T-cell (primary cell): ENCODE measurements at regions of chr17 and their contacts with region 1.

Region 1: DNA sequence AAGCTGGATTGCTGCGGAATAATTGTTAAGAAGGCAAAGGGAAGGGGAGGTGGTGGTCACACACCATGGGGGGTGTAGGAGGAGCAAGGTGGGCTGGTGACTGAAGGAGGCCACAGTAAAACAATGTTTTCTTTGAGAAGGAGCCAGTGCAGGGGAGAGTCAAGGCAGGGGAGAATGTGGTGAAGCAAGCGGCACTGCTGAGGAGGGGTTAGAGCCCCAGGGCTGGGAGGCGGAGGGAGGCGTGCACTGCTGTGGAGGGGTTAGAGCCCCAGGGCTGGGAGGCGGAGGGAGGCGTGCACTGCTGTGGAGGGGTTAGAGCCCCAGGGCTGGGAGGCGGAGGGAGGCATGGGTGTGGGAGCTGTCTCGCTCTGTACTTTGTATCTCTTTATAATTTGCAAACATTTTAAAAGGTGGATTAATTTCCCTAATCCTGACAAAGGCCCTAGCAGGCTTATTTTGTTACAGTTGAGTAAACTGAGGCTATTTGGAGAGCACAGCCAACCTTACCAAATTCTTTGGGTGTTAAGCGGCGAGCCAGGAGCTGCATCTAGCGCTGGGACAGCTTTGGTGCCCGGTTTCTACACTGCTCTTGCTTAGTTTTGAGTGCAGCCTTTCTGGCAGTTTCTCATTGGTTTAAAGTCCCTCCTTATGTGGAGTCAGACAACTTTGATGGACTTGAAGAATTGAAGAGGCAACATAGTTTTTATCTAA is 20.9 kb downstream of the RPTOR start:
- DNase-seq: no peak
- ATAC-seq: no peak
- H3K4me3 ChIP-seq: no peak overlapping the region
- H3K4me3 Mint-ChIP-seq: no peak overlapping the region
- H3K27ac ChIP-seq: no peak overlapping the region
- H3K27ac Mint-ChIP-seq: no peak overlapping the region
- H3K4me1 ChIP-seq: no peaks in the 10 kb centered on the region
- H3K4me1 Mint-ChIP-seq: peaks cover 24 to 33% (median 25%) of the 10 kb centered on the region in 3 donors
- H3K27me3 ChIP-seq: no peaks in the 10 kb centered on the region
- H3K27me3 Mint-ChIP-seq: no peaks in the 10 kb centered on the region

Region 2: GRCh38 chr17:80454557-80455335 is 110.8 kb before region 1 on chr17:
- CTCF ChIA-PET with region 1: no interaction called
- POLR2A ChIA-PET with region 1: interaction called in 1 of 2 experiments, 12 read pairs
- DNase-seq: peak; percentile 89 to 97 (median 93)
- ATAC-seq: peak; percentile 95
- H3K4me3 ChIP-seq: peak overlapping the region; percentile 83 to 92
- H3K4me3 Mint-ChIP-seq: peak overlapping the region; percentile 86 to 89 (median 88)
- H3K27ac ChIP-seq: peak overlapping the region; percentile 96
- H3K27ac Mint-ChIP-seq: peak overlapping the region; percentile 94 to 95
- H3K4me1 ChIP-seq: peaks cover 0 to 19% of the 10 kb centered on the region in 2 experiments
- H3K4me1 Mint-ChIP-seq: peaks cover 9 to 22% (median 12%) of the 10 kb centered on the region in 3 donors
- H3K27me3 ChIP-seq: peaks cover 0 to 35% of the 10 kb centered on the region in 2 experiments
- H3K27me3 Mint-ChIP-seq: peaks cover 14 to 29% of the 10 kb centered on the region in 2 donors

Region 3: DNA sequence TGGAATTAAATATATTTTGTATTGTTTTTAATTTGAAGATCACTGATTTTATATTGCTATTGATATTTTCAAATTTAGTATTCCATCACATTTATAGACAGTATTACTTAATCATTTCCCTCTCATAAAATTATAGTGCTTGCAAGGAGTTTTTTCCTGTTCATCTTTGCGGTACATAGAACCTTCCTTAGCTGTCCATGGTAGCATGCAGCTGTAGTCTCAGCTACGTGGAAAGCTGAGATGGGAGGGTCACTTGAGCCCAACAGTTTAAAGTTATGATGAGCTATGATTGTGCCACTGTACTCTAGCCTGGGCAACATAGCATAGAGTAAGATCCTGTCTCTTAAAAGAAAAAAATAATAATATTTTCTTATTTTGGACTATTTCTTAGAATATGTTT is 210.4 kb after region 1 on chr17:
- CTCF ChIA-PET with region 1: no interaction called
- POLR2A ChIA-PET with region 1: interaction called in 1 of 2 experiments, 10 read pairs
- DNase-seq: no peak
- ATAC-seq: no peak
- H3K4me3 ChIP-seq: no peak overlapping the region
- H3K4me3 Mint-ChIP-seq: no peak overlapping the region
- H3K27ac ChIP-seq: no peak overlapping the region
- H3K27ac Mint-ChIP-seq: peak overlapping the region in 1 of 2 donors; percentile 39
- H3K4me1 ChIP-seq: peaks cover 32 to 61% of the 10 kb centered on the region in 2 experiments
- H3K4me1 Mint-ChIP-seq: peaks cover 48 to 68% (median 66%) of the 10 kb centered on the region in 3 donors
- H3K27me3 ChIP-seq: no peaks in the 10 kb centered on the region
- H3K27me3 Mint-ChIP-seq: no peaks in the 10 kb centered on the region